A673 (cell line): ENCODE measurements at regions of chr17 and their contacts with region 1.

Region 1: DNA sequence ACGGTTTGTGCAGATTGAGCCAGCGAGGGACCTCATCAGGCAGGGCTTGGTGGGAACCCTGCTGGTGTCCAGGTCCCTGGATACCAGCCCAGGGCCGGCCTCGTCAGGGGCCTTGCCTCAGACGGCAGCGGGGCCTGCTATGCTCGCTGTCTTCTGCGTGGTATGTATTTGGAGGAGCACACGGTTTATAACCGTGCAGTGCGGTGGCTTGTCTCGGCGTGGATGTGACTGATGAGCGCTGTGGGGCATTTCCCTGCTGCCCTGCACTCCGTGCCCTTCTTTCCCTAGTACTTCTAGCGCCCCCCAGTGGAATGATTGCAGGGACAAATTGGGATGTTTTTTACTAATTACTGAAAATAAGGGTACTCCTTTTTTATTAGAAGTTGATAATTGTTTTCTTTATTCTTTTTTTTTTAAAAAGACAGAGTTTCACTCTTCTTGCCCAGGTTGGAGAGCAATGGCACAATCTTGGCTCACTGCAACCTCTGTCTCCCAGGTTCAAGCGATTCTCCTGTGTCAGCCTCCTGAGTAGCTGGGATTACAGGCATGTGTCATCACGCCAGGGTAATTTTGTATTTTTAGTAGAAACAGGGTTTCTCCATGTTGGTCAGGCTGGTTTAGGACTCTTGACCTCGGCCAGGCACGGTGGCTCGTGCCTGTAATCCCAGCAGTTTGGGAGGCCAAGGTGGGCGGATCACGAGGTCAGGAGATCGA is 15.3 kb downstream of the TBCD start:
- DNase-seq: peak; percentile 71
- H3K4me3 ChIP-seq: no peak overlapping the region
- H3K27ac ChIP-seq: no peak overlapping the region
- H3K4me1 ChIP-seq: no peaks in the 10 kb centered on the region
- H3K27me3 ChIP-seq: no peaks in the 10 kb centered on the region
- CTCF ChIP-seq: peak; percentile 74

Region 2: GRCh38 chr17:82351716-82352488 is 415.3 kb before region 1 on chr17:
- CTCF ChIA-PET with region 1: no interaction called
- POLR2A ChIA-PET with region 1: no interaction called
- intact Hi-C with region 1: loop called (anchors 5 kb)
- DNase-seq: peak; percentile 89
- H3K4me3 ChIP-seq: no peak overlapping the region
- H3K27ac ChIP-seq: no peak overlapping the region
- H3K4me1 ChIP-seq: peaks cover 17% of the 10 kb centered on the region
- H3K27me3 ChIP-seq: no peaks in the 10 kb centered on the region
- CTCF ChIP-seq: peak; percentile 92

Region 3: GRCh38 chr17:82648166-82648668 is 119.0 kb before region 1 on chr17 and contains the start of gene WDR45B:
- CTCF ChIA-PET with region 1: no interaction called
- POLR2A ChIA-PET with region 1: no interaction called
- intact Hi-C with region 1: loop called (anchors 10 kb)
- DNase-seq: peak; percentile 98
- H3K4me3 ChIP-seq: peak within 1 kb of the TSS; percentile 100
- H3K27ac ChIP-seq: peak within 1 kb of the TSS; percentile 98
- H3K4me1 ChIP-seq: peaks cover 5% of the 10 kb centered on the region
- H3K27me3 ChIP-seq: no peaks in the 10 kb centered on the region
- CTCF ChIP-seq: no peak
- total RNA-seq, gene WDR45B: 69.9 and 73.0 TPM in 2 replicates

Region 4: GRCh38 chr17:82859431-82860403 is 92.5 kb after region 1 on chr17:
- CTCF ChIA-PET with region 1: no interaction called
- POLR2A ChIA-PET with region 1: no interaction called
- intact Hi-C with region 1: no loop called
- DNase-seq: peak; percentile 28
- H3K4me3 ChIP-seq: no peak overlapping the region
- H3K27ac ChIP-seq: peak overlapping the region; percentile 38
- H3K4me1 ChIP-seq: peaks cover 20% of the 10 kb centered on the region
- H3K27me3 ChIP-seq: no peaks in the 10 kb centered on the region
- CTCF ChIP-seq: no peak